HAP-1 (cell line): ENCODE measurements at regions of chrX and their contacts with region 1.

Region 1: DNA sequence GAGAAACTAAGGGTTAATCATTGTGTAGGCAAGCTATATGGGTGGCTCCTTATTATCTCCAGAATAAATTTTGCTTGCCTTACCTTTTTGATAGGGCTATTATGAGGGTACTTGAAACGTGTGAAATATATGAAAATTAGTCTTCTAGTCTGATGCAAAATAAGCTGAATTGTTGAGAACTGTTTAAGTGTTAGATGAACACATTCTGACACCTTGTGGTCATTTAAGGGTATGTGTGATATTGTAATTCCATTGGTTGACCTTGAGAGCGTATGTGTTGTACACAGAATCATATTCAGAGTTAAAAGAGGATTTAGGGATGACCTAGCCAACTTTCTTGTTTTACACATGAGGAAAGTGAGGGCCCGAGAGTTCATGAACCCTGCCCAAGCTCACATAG is 44.6 kb upstream of the LINC00632 start:
- DNase-seq: peak in 1 of 2 experiments; percentile 80
- H3K4me3 ChIP-seq: no peak overlapping the region
- H3K4me1 ChIP-seq: peaks cover 11% of the 10 kb centered on the region
- H3K27me3 ChIP-seq: no peaks in the 10 kb centered on the region

Region 2: DNA sequence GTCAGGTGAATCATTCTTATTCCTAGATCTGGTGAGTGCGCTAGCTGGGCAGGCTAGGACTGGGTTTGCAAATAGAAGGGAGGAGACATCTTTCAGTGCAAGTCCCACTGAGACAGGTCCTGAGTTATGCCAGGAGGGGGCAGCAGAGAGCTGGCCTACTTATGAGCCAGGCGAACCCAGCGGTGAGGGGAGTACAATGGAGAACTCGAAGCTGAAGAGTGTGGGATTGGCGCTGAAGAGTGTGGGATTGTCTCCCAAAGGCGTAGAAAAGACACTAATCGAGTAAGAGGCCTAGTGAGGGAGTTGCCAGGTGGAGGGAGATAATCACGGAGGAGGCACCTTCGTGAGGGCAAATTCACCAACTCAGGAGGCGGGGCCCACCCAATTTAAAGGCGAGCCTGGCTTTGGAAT is 607.9 kb before region 1 on chrX:
- in situ Hi-C with region 1: loop called (anchors 25 kb)
- DNase-seq: peak; percentile 90 to 94
- H3K4me3 ChIP-seq: no peak overlapping the region
- H3K4me1 ChIP-seq: peaks cover 32% of the 10 kb centered on the region
- H3K27me3 ChIP-seq: no peaks in the 10 kb centered on the region

Region 3: GRCh38 chrX:140425745-140426395 is 239.1 kb before region 1 on chrX:
- in situ Hi-C with region 1: no loop called
- DNase-seq: no peak
- H3K4me3 ChIP-seq: no peak overlapping the region
- H3K4me1 ChIP-seq: no peaks in the 10 kb centered on the region
- H3K27me3 ChIP-seq: no peaks in the 10 kb centered on the region

Region 4: DNA sequence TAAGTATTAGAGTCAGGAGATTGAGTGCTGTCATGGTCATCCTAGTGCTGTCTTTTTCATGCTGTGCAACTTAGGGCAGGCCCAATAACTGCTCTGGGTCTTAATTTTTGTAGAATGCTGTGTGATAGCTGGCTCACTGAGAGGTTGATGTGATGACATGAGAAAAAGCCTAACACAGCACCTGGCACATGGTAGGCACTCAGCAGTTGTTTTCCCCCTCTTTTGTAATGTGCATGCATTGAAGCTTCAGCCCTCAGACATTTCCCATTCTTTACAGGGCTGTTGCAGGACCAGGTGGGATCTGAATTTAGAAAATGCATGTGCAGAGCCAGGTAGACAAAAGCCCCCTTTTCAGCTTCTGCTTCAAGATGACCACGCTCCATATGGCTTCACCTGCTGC is 116.0 kb before region 1 on chrX:
- in situ Hi-C with region 1: no loop called
- DNase-seq: no peak
- H3K4me3 ChIP-seq: no peak overlapping the region
- H3K4me1 ChIP-seq: no peaks in the 10 kb centered on the region
- H3K27me3 ChIP-seq: no peaks in the 10 kb centered on the region

Region 5: DNA sequence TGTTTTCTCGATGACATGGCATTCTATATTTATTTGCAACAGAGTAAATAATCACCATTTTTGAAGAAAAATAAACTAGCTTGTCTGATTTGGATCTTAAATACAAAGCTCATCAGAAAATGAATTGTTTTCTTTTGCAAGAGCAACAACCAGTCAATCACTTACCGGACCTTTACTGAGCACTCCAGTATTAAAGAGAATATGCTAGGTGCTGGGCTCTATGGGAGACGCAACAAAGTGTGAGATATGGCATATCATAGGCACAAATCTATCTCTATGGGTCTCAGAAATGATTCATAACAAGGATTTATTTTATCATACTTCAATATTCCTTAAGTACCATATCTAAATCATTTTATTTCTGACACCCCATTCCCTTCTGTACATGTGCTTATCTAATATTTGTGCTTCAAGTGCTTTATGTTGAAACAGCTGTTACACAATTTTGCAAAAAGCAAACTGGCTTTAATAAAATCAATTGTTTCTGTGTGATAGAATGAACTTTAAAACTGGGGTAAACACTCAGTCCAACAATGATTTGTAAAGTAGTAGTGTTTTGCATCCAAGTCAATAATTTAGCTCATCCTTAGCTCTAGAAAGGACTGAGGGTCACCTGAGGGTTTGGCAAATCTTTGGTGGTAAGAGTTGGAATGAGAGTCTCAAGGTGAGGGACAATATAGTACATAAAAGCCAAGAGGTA is 249.0 kb after region 1 on chrX:
- in situ Hi-C with region 1: no loop called
- DNase-seq: no peak
- H3K4me3 ChIP-seq: no peak overlapping the region
- H3K4me1 ChIP-seq: 0 out of 2 replicates have a peak, but pooled peaks cover 3% of the 10 kb centered on the region
- H3K27me3 ChIP-seq: no peaks in the 10 kb centered on the region